K562 (cell line): ENCODE measurements at regions of chr22 and their contacts with region 1.

Region 1: DNA sequence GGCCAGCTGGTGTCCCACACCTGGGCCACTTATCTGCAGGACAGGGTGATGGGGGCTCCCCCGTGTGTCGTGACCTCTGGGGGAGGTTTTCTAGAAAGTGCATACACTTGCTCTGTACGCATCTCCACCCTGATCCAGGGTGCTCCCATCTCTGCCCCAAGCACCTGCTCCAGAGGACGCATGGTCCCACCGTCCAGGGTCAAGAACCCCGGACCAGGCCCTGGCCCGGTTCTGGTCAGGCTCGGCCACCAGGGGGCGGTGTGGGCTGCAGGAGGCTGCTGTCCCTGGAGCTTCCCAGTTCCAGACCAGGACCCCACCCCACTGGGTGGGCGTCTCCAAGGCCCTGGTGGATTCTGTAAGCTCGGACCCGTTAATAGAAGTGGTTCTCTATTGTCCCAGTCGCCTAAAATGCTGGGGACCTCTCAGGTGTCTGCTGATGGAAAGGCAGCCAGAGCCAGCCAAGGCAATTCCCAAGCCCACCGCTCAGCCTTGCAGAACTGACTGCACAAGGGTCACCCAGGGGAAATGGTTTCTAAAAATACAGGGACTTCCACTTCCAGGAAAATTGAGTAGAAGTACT is 34.7 kb upstream of the SEPTIN5 start:
- DNase-seq: peak; percentile 86 to 99 (median 96)
- ATAC-seq: peak; percentile 94
- H3K4me3 ChIP-seq: no peak overlapping the region
- H3K27ac ChIP-seq: no peak overlapping the region
- H3K4me1 ChIP-seq: peaks cover 4 to 12% of the 10 kb centered on the region in 2 experiments; a peak in 4 of 5 replicates
- H3K27me3 ChIP-seq: peaks cover 14% of the 10 kb centered on the region in 2 experiments
- CTCF ChIP-seq: peak; percentile 98 to 100 (median 99)
- EP300 ChIP-seq: peak; percentile 51; the same call in 1 of the 2 replicates
- POLR2A ChIP-seq: no peak
- RAD21 ChIP-seq: peak; percentile 91 to 100; a peak in 3 of 4 replicates

Region 2: DNA sequence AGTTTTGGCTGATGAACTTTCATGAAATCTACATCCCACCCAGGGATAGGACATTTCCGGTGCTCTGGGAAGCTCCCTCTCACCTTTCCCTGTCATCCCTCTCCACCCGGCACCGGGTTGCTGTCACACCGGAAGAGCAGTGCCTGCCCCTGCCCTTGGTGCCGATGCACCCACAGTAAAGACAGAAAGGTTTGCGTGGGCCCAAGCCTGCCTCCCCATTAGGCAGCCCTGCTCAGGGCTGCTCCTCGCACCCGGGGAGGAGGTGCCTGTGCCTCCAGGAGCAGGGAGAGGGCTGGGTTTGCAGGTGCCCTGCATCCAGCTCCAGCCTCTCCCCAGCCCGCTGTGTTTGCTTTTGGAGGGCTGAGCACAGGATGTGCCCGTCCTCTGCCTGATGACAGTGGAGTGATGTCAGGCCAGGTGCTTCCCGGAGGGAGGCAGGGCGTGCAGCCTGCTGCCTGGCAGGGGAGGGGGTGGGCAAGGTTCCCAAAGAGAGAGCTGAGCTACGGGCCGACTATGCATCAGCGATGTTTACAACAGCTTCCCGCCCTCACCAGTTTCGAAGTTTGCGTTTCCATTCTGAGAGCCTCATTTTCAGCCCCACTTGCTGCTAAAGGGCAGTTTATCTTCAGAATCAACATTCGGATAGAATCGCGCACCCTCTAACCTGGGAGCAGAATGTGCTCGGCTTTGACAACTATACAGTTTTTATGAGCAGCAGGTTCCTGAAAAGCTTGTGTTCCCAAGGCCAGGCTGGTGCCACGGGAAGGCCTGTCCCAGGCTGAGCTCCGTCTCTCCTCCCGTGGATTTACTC is 72.2 kb before region 1 on chr22:
- CTCF ChIA-PET with region 1: no interaction called
- POLR2A ChIA-PET with region 1: no interaction called
- in situ Hi-C with region 1: no loop called
- intact Hi-C with region 1: no loop called
- DNase-seq: peak in 1 of 4 experiments; percentile 45
- ATAC-seq: peak; percentile 2; the same call in 1 of the 3 replicates
- H3K4me3 ChIP-seq: no peak overlapping the region
- H3K27ac ChIP-seq: no peak overlapping the region
- H3K4me1 ChIP-seq: peaks cover 9 to 22% of the 10 kb centered on the region in 2 experiments; a peak in 4 of 5 replicates
- H3K27me3 ChIP-seq: peaks cover 90 to 92% of the 10 kb centered on the region in 2 experiments
- CTCF ChIP-seq: no peak
- EP300 ChIP-seq: no peak
- POLR2A ChIP-seq: no peak
- RAD21 ChIP-seq: no peak

Region 3: DNA sequence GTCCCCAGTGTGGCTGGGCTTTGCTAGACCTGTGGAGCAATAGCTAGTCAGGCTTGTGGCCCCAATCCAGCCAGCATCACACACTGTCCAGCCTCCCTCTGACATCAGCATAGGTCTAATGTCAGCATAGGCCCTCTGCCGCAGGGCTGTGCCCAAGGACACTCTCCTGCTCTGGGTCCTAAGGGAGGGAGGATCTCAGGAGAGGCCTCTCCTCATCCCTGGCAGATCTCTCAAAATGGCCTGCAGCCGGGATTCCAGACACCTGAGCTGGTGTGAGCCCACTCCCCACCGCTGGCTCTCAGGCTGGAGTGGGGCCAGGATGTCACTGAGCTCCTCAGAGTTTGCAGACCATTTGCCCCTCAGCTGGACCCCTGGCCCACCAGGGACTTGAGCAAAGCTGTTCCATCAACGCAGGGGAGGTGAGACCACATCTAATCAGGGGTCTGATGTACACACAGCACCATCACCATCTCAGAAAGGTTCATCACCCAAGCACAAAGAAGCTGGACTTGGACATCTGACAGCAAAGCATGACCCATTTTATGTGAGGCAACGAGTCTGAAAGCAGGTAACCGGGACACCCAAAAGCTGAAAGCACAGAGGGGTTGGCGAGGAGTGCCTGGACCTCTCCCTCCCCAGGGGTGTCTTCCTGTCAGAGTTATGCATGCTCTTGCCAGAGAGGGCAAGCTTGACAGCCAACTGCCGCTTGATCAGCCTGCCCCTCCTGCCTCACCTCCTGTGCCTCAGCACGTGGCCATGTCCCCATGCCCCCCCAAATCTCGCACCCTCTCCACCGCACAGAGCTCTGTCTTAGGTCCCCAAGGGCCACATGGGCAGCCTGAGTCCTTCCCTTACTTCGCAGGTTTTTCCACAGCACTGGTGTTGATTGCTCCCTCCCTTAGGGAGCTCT is 35.0 kb before region 1 on chr22:
- CTCF ChIA-PET with region 1: no interaction called
- POLR2A ChIA-PET with region 1: interaction called, 10 read pairs
- in situ Hi-C with region 1: no loop called
- intact Hi-C with region 1: no loop called
- DNase-seq: peak; percentile 70 to 79 (median 73)
- ATAC-seq: peak; percentile 75
- H3K4me3 ChIP-seq: no peak overlapping the region
- H3K27ac ChIP-seq: peak overlapping the region; percentile 12; the same call in 2 of the 3 replicates
- H3K4me1 ChIP-seq: peaks cover 35 to 37% of the 10 kb centered on the region in 2 experiments; a peak in 4 of 5 replicates
- H3K27me3 ChIP-seq: peaks cover 0 to 6% of the 10 kb centered on the region in 2 experiments; a peak in 1 of 5 replicates
- CTCF ChIP-seq: peak in 1 of 3 experiments; percentile 15; a peak in 1 of 6 replicates
- EP300 ChIP-seq: no peak
- POLR2A ChIP-seq: no peak
- RAD21 ChIP-seq: 0 out of 4 replicates have a peak, but pooled peaks of 1 of the 2 experiments have one; percentile 3

Region 4: GRCh38 chr22:19663286-19663815 is 16.3 kb before region 1 on chr22:
- CTCF ChIA-PET with region 1: no interaction called
- POLR2A ChIA-PET with region 1: interaction called, 80 read pairs
- in situ Hi-C with region 1: no loop called
- intact Hi-C with region 1: no loop called
- DNase-seq: peak in 1 of 4 experiments; percentile 29
- ATAC-seq: peak; percentile 24
- H3K4me3 ChIP-seq: no peak overlapping the region
- H3K27ac ChIP-seq: no peak overlapping the region
- H3K4me1 ChIP-seq: peaks cover 15 to 23% of the 10 kb centered on the region in 2 experiments
- H3K27me3 ChIP-seq: peaks cover 55 to 58% of the 10 kb centered on the region in 2 experiments
- CTCF ChIP-seq: no peak
- EP300 ChIP-seq: no peak
- POLR2A ChIP-seq: no peak
- RAD21 ChIP-seq: no peak

Region 5: GRCh38 chr22:19691721-19692341 is 12.2 kb after region 1 on chr22:
- CTCF ChIA-PET with region 1: no interaction called
- POLR2A ChIA-PET with region 1: interaction called, 40 read pairs
- in situ Hi-C with region 1: no loop called
- intact Hi-C with region 1: no loop called
- DNase-seq: peak; percentile 85 to 93 (median 92)
- ATAC-seq: peak; percentile 79
- H3K4me3 ChIP-seq: peak overlapping the region; percentile 3; the same call in 1 of the 2 replicates
- H3K27ac ChIP-seq: peak overlapping the region; percentile 47
- H3K4me1 ChIP-seq: peaks cover 24 to 58% of the 10 kb centered on the region in 2 experiments; a peak in 4 of 5 replicates
- H3K27me3 ChIP-seq: peaks cover 21 to 40% of the 10 kb centered on the region in 2 experiments
- CTCF ChIP-seq: peak in 1 of 3 experiments; percentile 14; a peak in 1 of 6 replicates
- EP300 ChIP-seq: no peak; the same call in 1 of the 2 replicates
- POLR2A ChIP-seq: peak; percentile 77
- RAD21 ChIP-seq: no peak

Region 6: DNA sequence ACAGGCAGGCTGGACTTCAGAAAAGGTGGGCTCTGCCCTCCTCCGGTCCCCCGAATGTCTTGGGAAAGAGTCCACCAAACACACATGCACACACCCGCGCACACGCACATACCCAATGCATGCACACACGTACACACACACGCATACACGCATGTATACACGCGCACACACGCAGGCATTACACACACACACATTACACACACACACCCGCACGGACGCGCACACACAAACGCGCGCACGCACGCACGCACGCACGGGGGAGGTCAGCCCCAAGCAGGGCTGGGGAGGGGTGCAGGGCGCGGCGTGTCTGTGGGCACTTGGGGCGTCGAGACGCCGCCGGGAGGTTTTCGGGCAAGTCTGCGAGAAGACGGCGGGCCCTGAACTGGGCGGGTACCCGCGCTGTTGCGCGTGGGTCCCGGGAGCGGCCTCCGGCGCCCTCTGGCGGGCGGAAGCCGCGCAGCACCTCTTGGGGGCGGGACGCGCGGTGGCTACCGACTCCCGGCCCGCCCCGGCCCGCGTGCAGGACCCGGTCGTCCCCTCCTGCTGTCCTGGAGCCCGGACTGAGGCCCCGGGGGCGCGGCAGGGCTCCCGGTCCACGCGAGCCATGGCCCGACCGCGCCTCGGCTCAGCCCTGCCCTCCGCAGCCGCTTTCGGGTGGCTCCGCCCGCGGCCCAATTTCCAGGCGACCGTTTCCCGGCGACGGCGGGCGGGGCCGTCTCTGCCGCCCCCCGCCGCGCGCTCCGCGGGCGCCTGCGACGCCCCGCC is 38.3 kb after region 1 on chr22:
- CTCF ChIA-PET with region 1: interaction called, 113 read pairs
- POLR2A ChIA-PET with region 1: interaction called, 4 read pairs
- in situ Hi-C with region 1: no loop called
- intact Hi-C with region 1: loop called (anchors 1 kb)
- DNase-seq: peak; percentile 98 to 99 (median 98)
- ATAC-seq: peak; percentile 69
- H3K4me3 ChIP-seq: peak overlapping the region; percentile 51
- H3K27ac ChIP-seq: peak overlapping the region; percentile 92
- H3K4me1 ChIP-seq: peaks cover 62 to 97% of the 10 kb centered on the region in 2 experiments
- H3K27me3 ChIP-seq: peaks cover 0 to 10% of the 10 kb centered on the region in 2 experiments; a peak in 2 of 5 replicates
- CTCF ChIP-seq: peak; percentile 98 to 100 (median 98)
- EP300 ChIP-seq: peak; percentile 47; the same call in 1 of the 2 replicates
- POLR2A ChIP-seq: peak; percentile 2; the same call in 1 of the 2 replicates
- RAD21 ChIP-seq: peak in 1 of 2 experiments; percentile 100; a peak in 2 of 4 replicates

Region 7: DNA sequence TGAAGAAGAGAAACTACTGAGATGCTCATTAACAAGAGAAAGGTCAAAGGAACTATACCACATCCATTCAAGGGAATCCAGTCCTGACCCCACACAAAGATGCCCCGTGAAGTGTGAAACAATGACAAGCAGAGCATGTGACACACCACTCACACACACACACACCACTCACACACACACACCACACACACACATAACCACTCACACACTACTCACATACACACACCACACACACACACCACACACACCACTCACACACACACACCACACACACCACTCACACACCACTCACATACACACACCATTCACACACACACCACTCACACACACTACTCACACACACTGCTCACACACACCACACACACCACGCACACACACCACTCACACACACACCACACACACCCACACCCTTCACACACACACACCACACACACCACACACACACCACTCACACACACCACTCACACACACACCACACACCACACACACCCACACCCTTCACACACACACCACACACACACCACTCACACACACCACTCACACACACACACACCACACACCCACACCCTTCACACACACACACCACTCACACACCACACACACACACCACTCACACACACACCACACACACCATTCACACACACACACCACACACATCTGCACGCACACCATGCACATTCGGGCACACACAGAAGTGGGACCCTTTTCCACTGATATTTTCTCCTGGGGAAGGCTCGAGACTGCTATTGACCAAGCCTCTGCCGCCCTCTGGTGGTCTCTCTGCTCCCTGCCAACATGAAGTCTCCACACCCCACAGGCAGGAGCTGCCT is 230.0 kb after region 1 on chr22:
- CTCF ChIA-PET with region 1: interaction called, 26 read pairs
- POLR2A ChIA-PET with region 1: interaction called, 3 read pairs
- in situ Hi-C with region 1: no loop called
- intact Hi-C with region 1: loop called (anchors 2 kb)
- DNase-seq: peak; percentile 97 to 99 (median 98)
- ATAC-seq: peak; percentile 97
- H3K4me3 ChIP-seq: no peak overlapping the region
- H3K27ac ChIP-seq: peak overlapping the region; percentile 16; the same call in 1 of the 3 replicates
- H3K4me1 ChIP-seq: peaks cover 2 to 28% of the 10 kb centered on the region in 2 experiments; a peak in 4 of 5 replicates
- H3K27me3 ChIP-seq: no peaks in the 10 kb centered on the region; a peak in 1 of 5 replicates
- CTCF ChIP-seq: peak; percentile 98 to 100 (median 100)
- EP300 ChIP-seq: peak; percentile 51
- POLR2A ChIP-seq: peak; percentile 25; the same call in 1 of the 2 replicates
- RAD21 ChIP-seq: peak; percentile 100